ENCODE measurements at regions of chr5 and their contacts with region 1.

Region 1: DNA sequence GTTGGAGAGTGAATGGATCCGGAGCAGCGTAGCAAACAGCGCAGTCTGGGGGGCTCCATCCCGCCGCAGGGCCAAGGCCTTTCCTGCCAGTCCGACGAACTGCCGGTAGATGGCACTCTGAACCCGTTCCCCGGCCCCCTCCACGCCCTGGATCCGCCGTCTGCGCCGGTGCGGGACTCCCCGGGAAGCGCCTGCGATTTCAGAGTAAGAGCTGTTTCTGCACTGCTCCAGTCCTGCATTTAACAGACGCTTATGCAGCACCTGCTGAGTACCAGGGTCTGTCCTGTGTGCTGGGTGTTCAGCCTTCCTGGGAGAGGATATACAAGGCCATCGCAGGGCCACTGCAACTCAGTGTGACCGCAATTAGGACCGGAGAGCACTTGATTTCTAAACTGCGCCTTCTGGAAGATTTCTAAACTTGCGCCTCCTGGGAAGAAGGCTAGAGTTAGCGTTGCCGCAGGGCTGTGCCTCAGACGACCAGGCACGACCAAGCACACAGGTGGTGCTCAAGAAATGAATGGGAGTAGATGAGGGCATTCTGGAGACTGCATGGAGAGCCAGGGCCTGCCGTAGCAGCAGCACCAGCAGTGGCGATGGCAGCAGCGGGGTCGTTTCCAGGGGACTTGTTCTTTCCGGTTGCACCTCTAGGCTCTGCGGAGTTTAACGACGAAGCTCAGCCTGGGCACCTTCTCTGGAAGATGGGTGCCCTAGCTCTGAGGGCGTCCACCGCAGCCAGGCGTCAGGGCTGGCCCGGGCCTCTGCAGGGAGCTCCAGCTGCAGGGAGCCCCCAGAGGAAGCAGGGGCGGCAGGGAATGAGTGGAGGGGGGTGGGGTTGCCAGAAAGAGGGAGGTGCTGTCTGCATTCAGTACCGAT is 14.3 kb upstream of the TIFAB start:
- DNase-seq: peak; percentile 68
- H3K4me3 Mint-ChIP-seq: peak overlapping the region; percentile 40
- H3K27ac Mint-ChIP-seq: no peak overlapping the region
- H3K4me1 Mint-ChIP-seq: peaks cover 12% of the 10 kb centered on the region
- H3K27me3 Mint-ChIP-seq: peaks cover 36% of the 10 kb centered on the region

Region 2: DNA sequence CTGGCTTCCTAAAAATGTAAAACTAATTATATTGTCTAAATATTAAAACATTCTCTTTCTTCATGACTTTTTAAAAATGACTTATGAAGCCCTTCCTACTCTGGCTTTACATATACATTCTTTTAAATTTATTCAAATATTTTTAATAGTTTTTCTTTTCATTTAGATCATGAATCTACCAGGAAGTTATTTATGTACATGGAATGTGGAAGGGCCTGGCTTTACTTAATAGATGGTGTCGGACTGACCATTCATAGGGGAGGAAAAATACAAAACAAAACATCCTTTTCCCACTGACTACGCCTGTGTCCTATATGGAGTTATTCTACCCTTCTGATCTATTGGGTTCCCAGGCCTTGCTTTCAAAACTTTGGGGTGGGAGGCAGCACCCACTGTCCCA is 197.2 kb before region 1 on chr5:
- intact Hi-C with region 1: no loop called
- DNase-seq: no peak
- H3K4me3 Mint-ChIP-seq: no peak overlapping the region
- H3K27ac Mint-ChIP-seq: no peak overlapping the region
- H3K4me1 Mint-ChIP-seq: no peaks in the 10 kb centered on the region
- H3K27me3 Mint-ChIP-seq: peaks cover 2% of the 10 kb centered on the region

Region 3: GRCh38 chr5:135551593-135552447 is 85.4 kb after region 1 on chr5:
- intact Hi-C with region 1: loop called (anchors 1 kb)
- DNase-seq: peak; percentile 40
- H3K4me3 Mint-ChIP-seq: no peak overlapping the region
- H3K27ac Mint-ChIP-seq: no peak overlapping the region
- H3K4me1 Mint-ChIP-seq: no peaks in the 10 kb centered on the region
- H3K27me3 Mint-ChIP-seq: peaks cover 47% of the 10 kb centered on the region

Region 4: DNA sequence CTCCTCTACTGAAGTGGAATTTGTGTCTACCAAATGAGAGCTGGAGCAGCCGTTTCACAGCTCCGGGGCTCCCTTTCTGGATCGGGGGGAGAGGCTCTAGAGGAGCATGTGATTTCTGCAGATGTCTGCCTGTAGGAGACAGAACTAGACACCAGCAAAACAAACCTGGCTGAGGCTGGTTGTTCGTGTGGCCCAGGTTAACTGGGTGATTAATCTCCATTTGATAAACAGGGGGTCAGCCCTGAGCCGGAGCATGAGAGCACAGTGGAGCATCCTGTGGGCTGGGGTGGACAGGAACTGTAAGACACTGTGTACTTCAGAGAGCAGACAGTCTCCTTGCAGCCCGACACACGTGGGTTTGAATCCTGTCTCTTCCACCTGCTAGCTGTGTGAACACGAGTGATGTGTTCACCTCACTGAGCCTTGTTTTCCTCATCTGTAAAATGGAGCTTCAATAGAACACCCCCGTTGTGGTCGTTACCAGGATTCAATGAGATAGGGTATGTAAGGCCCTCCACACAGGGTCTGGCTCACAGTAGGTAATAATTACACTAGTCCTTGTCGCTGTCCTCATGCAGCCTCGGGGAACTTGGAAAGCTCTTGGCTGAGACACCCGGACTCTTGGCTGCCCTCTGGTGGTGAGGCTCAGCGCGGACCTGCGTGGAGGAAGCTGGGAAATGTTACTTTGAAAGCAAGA is 99.5 kb after region 1 on chr5:
- intact Hi-C with region 1: loop called (anchors 1 kb)
- DNase-seq: peak; percentile 54
- H3K4me3 Mint-ChIP-seq: no peak overlapping the region
- H3K27ac Mint-ChIP-seq: no peak overlapping the region
- H3K4me1 Mint-ChIP-seq: peaks cover 7% of the 10 kb centered on the region
- H3K27me3 Mint-ChIP-seq: peaks cover 6% of the 10 kb centered on the region

Region 5: DNA sequence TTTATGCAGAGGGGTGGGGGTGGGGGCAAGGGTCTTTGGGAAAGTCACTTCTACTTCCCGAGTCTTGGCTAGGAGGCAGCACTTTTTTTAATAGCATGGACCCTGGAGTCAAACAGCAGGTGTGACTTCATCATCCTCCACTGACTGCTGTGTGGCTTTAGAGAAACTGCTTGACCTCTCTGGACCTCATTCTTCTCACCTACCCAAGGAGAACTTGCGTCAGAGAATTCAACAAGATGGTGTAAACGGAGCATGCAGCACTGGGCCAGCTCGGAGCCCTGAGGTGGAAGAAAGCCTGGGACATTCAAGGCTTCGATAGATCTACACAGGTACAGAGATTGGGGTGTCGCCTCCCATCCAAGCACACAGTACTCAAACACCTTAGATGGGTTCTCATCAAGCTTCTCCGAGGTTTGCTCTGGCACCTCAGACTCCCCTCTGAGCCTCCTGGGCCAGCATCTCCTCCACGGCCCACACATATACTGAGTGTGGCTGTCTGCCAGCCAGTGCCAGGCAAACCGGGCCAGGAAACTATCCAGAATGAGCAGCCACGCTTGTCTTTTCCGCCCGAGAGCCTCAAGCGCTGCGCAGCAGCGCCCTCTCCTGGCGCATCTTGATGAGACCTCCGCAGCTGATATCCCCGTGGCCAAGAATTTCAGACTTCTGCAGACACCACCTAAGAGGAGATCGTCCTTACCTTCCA is 363.4 kb after region 1 on chr5:
- intact Hi-C with region 1: loop called (anchors 5 kb)
- DNase-seq: peak; percentile 8
- H3K4me3 Mint-ChIP-seq: no peak overlapping the region
- H3K27ac Mint-ChIP-seq: no peak overlapping the region
- H3K4me1 Mint-ChIP-seq: peaks cover 5% of the 10 kb centered on the region
- H3K27me3 Mint-ChIP-seq: peaks cover 18% of the 10 kb centered on the region